GM10248 (cell line): ENCODE measurements at regions of chr11 and their contacts with region 1.

Region 1: GRCh38 chr11:96464700-96465307 is 75.0 kb downstream of the JRKL start:
- DNase-seq: peak; percentile 67
- CTCF ChIP-seq: peak; percentile 73

Region 2: GRCh38 chr11:95705485-95706124 is 759.2 kb before region 1 on chr11:
- CTCF ChIA-PET with region 1: no interaction called
- POLR2A ChIA-PET with region 1: no interaction called
- DNase-seq: peak; percentile 61
- CTCF ChIP-seq: peak; percentile 91

Region 3: DNA sequence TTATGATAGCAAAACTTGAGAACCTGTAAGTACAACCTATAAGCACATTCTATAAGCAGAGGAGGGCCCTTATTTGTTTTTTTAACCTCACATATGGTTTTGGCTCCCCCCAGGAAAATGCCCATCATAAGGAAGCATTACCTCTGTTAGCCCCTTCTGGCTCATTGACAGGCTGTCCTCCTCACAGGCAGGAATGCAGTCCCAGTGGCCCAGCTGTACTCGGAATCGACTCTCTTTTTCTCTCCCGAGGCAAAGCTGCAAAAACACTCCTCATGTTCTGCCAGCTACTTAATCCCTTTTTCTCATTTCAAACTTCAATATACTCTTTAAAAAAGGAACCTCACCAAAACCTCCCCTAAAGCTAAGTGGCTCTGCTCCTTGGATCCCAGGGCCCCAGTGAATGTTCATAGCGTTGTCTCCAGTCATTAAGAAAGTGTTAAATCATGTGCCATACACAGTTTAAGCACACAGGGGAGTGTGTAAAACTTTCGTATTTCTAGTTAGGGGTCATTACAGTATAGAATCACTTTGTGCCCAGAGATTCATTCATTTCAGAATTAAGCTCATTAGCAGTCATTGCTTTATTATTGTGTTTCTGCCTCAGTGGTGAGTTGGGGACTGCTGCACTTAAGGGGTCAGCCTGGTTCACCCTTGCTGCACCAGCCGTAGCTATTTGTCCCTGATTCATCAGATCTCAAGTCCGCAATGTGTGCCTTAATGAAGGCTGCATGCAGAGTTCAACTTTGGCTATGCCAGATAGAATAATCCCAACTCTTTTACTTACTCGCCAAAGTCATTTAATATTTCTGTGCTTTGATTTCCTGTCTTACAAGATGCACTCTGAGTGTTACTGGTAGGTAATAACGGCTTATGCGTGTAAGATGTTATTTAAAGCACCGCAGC is 17.3 kb before region 1 on chr11:
- CTCF ChIA-PET with region 1: interaction called, 55 read pairs
- POLR2A ChIA-PET with region 1: no interaction called
- DNase-seq: no peak
- CTCF ChIP-seq: no peak

Region 4: DNA sequence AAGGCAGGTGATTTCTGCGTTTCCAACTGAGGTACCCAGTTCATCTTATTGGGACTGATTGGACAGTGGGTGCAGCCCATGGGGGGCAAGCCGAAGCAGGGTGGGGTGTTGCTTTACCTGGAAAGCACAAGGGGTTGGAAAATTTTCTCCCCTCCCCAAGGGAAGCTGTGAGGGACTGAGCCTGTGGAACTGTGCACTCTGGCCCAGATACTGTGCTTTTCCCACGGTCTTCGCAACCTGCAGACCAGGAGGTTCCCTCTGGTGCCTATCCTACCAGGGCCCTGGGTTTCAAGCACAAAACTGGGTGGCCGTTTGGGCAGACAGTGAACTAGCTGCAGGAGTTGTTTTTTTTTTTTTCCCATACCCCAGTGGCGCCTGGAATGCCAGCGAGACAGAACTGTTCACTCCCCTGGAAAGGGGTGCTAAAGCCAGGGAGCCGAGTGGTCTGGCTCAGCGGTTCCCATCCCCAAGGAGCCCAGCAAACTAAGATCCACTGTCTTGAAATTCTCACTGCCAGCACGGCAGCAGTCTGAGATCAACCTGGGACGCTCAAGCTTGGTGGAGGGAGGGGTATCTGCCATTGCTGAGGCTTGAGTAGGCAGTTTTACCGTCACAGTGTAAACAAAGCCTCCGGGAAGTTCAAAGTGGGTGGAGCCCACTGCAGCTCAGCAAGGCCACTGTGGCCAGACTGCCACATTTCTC is 22.2 kb after region 1 on chr11:
- CTCF ChIA-PET with region 1: interaction called, 70 read pairs
- POLR2A ChIA-PET with region 1: no interaction called
- DNase-seq: no peak
- CTCF ChIP-seq: no peak

Region 5: DNA sequence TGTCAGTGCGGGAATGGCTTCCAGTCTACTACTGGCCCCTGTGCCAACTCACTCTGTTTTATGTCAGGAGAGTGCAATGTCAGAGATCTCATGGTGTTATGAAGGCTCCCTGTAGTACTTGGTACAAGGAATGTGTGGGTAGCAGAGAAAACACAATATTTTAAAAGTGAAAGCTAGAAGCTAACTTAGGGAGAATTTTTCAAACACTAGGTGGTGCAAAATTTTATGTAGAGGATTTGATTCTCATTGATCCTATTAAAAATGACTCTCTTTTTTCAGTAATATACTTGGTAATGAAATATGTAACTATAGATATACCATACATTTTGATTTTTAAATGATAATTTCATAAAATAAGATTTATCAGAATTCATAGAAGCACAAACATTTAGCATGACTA is 59.7 kb after region 1 on chr11:
- CTCF ChIA-PET with region 1: interaction called, 10 read pairs
- POLR2A ChIA-PET with region 1: no interaction called
- DNase-seq: no peak
- CTCF ChIP-seq: no peak

Region 6: GRCh38 chr11:96664110-96664509 is 199.3 kb after region 1 on chr11:
- CTCF ChIA-PET with region 1: no interaction called
- POLR2A ChIA-PET with region 1: no interaction called
- DNase-seq: no peak
- CTCF ChIP-seq: no peak

Region 7: DNA sequence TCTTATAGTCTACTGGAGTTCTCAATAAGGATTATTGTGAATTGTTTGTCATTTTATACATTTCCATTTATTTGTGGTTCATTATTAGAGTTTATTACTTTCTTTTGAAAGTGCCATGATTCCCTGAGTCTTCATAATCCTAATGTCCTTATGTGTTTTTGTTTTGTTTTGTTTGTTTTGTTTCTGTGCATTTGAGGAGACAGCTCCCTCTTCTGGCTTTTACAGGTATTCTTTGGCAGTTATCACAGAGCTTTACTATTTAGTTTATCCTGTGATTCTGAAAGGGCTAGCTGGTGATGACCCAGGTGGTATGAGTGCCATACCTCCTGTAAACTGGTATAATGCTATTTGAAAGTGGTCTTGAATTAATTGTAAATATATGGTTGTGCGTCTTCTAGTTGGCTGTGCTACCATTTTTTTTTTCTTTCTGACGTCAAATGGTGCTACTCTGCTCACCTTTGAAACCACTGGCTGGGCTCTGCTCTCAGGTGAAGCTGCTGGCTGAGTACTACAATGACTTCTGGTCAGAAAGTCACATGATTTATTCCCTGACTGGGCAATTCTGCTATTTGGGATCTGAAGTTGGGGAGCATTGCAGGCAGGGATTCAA is 676.2 kb after region 1 on chr11:
- CTCF ChIA-PET with region 1: interaction called, 32 read pairs
- POLR2A ChIA-PET with region 1: no interaction called
- DNase-seq: peak; percentile 6
- CTCF ChIP-seq: peak; percentile 24